HepG2 (cell line): ENCODE measurements at regions of chr12 and their contacts with region 1.

Region 1: DNA sequence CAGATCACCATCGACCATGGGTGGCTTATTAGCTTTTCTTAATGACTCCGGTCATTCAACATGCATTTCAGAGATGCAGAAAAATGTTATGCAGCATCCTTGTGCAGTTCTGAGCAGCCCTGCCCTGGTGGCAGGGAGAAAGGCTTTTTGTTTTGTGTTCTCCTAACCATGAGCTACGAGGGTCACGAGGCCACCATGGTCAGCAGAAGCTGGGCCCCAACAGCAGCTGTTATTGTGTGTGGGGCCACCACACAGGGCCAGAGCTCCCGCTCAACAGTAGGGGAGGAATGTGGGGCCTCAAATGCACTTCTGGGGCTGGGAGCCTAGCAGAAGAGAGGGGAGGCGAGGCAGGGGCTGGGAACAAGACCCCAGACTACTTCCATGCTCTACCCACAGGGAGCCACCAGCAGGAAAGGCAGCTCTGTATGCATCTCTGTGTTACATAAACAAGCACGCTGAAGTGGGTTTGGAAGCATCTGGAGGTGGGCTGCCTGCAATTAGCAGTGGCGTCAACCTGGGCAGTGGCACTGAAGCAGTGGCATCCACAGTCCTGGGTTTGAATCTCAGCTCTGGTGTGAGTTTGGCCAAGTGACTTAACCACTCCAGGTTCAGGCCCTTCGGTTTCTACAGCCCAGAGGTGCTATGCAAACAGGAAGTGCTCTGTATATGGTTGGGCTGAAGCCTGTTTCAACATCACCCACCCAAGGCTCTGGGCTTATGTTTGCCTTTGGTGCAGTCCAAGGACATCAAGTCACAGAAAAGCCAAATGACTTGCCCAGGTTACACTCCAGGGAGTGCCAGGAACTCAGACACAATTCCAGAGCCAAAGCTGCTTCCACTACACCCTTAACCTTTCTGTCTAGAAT is 16.3 kb downstream of the GLTP start:
- DNase-seq: peak; percentile 97
- ATAC-seq: peak; percentile 96
- H3K4me3 ChIP-seq: peak overlapping the region in 1 of 3 experiments; percentile 52; a peak in 2 of 6 replicates
- H3K27ac ChIP-seq: peak overlapping the region; percentile 87
- H3K4me1 ChIP-seq: peaks cover 59% of the 10 kb centered on the region
- H3K27me3 ChIP-seq: no peaks in the 10 kb centered on the region
- CTCF ChIP-seq: no peak
- EP300 ChIP-seq: peak in 1 of 2 experiments; percentile 89; a peak in 2 of 4 replicates
- POLR2A ChIP-seq: peak in 1 of 2 experiments; percentile 48; a peak in 1 of 4 replicates
- RAD21 ChIP-seq: peak; percentile 9; the same call in 1 of the 2 replicates

Region 2: GRCh38 chr12:109804820-109805761 is 59.0 kb before region 1 on chr12:
- CTCF ChIA-PET with region 1: no interaction called
- POLR2A ChIA-PET with region 1: no interaction called
- in situ Hi-C with region 1: no loop called
- intact Hi-C with region 1: no loop called
- DNase-seq: peak; percentile 45
- ATAC-seq: peak; percentile 84
- H3K4me3 ChIP-seq: no peak overlapping the region; a peak in 1 of 6 replicates
- H3K27ac ChIP-seq: no peak overlapping the region
- H3K4me1 ChIP-seq: peaks cover 5% of the 10 kb centered on the region; the same call in 1 of the 2 replicates
- H3K27me3 ChIP-seq: no peaks in the 10 kb centered on the region
- CTCF ChIP-seq: peak; percentile 94
- EP300 ChIP-seq: no peak
- POLR2A ChIP-seq: no peak
- RAD21 ChIP-seq: peak; percentile 91

Region 3: GRCh38 chr12:109880016-109880931 is 16.2 kb after region 1 on chr12 and contains the start of gene GLTP:
- CTCF ChIA-PET with region 1: no interaction called
- POLR2A ChIA-PET with region 1: interaction called, 11 read pairs
- in situ Hi-C with region 1: no loop called
- intact Hi-C with region 1: no loop called
- DNase-seq: peak; percentile 58
- ATAC-seq: peak; percentile 93
- H3K4me3 ChIP-seq: peak within 1 kb of the TSS; percentile 73 to 92 (median 80)
- H3K27ac ChIP-seq: no peak within 1 kb of the TSS
- H3K4me1 ChIP-seq: peaks cover 58% of the 10 kb centered on the region
- H3K27me3 ChIP-seq: peaks cover 0 to 9% of the 10 kb centered on the region in 2 experiments; a peak in 2 of 5 replicates
- CTCF ChIP-seq: peak; percentile 59; the same call in 1 of the 2 replicates
- EP300 ChIP-seq: no peak
- POLR2A ChIP-seq: peak in 1 of 2 experiments; percentile 32; a peak in 1 of 4 replicates
- RAD21 ChIP-seq: peak; percentile 100
- total RNA-seq, gene GLTP: 12.9 and 13.0 TPM in 2 replicates